Activated CD4-positive, alpha-beta T cell treated with anti-CD3 and anti-CD28 coated beads for 36 hours (primary cell): ENCODE measurements at regions of chr2 and their contacts with region 1.

Region 1: DNA sequence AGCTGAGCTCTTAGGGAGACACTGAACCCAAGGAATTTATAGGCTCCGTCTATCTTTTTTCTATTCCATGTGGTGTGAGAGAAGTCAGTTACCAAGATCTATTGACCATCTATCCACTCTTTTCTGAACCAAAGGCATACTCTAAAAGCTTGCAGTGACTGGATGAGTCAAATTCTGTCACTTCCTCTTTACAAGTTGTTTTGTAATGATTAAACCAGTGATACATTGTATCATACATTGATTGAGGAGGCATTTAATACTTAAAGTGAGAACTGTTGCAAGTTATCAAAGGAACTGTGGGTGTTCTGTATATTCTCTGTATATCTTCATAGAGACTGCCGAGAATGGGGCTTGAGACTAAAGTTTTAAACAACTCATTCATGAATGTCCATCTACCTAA is 188.8 kb downstream of the CAMKMT start:
- DNase-seq: no peak
- ATAC-seq: peak; percentile 92
- H3K4me3 Mint-ChIP-seq: no peak overlapping the region
- H3K27ac Mint-ChIP-seq: peak overlapping the region; percentile 39
- H3K4me1 Mint-ChIP-seq: peaks cover 17% of the 10 kb centered on the region
- H3K27me3 Mint-ChIP-seq: no peaks in the 10 kb centered on the region

Region 2: GRCh38 chr2:44450082-44450481 is 100.5 kb before region 1 on chr2:
- CTCF ChIA-PET with region 1: no interaction called
- POLR2A ChIA-PET with region 1: no interaction called
- intact Hi-C with region 1: no loop called
- DNase-seq: no peak
- ATAC-seq: no peak
- H3K4me3 Mint-ChIP-seq: no peak overlapping the region
- H3K27ac Mint-ChIP-seq: no peak overlapping the region
- H3K4me1 Mint-ChIP-seq: no peaks in the 10 kb centered on the region
- H3K27me3 Mint-ChIP-seq: no peaks in the 10 kb centered on the region

Region 3: GRCh38 chr2:44578421-44579135 is 28.0 kb after region 1 on chr2:
- CTCF ChIA-PET with region 1: interaction called, 3 read pairs
- POLR2A ChIA-PET with region 1: no interaction called
- intact Hi-C with region 1: loop called in 1 of 2 experiments (anchors 2 kb)
- DNase-seq: no peak
- ATAC-seq: peak; percentile 96
- H3K4me3 Mint-ChIP-seq: peak overlapping the region; percentile 34
- H3K27ac Mint-ChIP-seq: peak overlapping the region; percentile 83
- H3K4me1 Mint-ChIP-seq: peaks cover 32% of the 10 kb centered on the region
- H3K27me3 Mint-ChIP-seq: no peaks in the 10 kb centered on the region